T-cell (primary cell): ENCODE measurements at regions of chr20 and their contacts with region 1.

Region 1: GRCh38 chr20:63864847-63865640 is at the start of gene TPD52L2:
- DNase-seq: peak; percentile 91 to 99 (median 97)
- ATAC-seq: peak; percentile 87 to 91 (median 88)
- H3K4me3 ChIP-seq: peak within 1 kb of the TSS; percentile 75 to 95
- H3K4me3 Mint-ChIP-seq: peak within 1 kb of the TSS; percentile 86 to 99 (median 90)
- H3K27ac ChIP-seq: peak within 1 kb of the TSS; percentile 65
- H3K27ac Mint-ChIP-seq: peak within 1 kb of the TSS; percentile 97
- H3K4me1 ChIP-seq: peaks cover 7 to 37% of the 10 kb centered on the region in 2 experiments
- H3K4me1 Mint-ChIP-seq: peaks cover 24 to 32% (median 27%) of the 10 kb centered on the region in 3 donors
- H3K27me3 ChIP-seq: no peaks in the 10 kb centered on the region
- H3K27me3 Mint-ChIP-seq: no peaks in the 10 kb centered on the region
- total RNA-seq, gene TPD52L2: 27.8 to 44.1 (median 39.3) TPM

Region 2: DNA sequence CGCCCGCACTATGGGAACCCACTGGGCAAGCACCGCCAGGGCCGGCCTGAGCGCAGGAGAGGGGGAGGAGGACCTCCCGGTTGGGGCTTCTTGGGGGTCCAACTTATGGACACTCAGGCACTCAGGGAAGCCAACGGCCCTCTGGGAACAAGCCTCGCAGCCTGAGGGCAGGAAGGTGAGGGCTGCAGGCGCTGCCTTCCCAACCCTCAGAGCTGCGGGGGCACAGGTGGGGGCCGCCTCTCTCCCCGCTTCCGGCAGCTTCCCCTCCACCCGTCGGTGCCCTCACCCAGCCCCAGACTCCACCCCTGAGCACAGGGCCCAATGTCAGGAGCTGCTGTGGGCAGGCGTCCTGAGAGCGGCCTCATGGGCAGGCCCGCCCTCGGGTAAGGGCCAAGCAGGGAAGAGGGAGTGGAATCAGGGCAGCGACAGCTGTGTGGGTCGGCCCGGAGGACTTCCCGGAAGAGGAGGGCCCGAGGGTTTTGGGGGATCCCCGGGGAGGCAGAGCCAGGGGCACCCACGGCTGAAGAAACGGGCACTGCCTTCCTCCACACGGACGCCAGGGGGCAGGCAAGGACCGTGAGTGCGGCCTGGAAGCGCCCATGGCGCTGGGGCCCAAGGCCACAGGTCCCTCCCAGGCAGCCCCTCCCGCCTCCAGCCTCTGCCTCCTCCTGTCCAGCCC is 327.4 kb before region 1 on chr20:
- CTCF ChIA-PET with region 1: interaction called, 3 to 13 read pairs
- POLR2A ChIA-PET with region 1: no interaction called
- DNase-seq: peak; percentile 84 to 97 (median 90)
- ATAC-seq: peak; percentile 87 to 91 (median 89)
- H3K4me3 ChIP-seq: peak overlapping the region; percentile 48 to 59
- H3K4me3 Mint-ChIP-seq: peak overlapping the region; percentile 57 to 73 (median 70)
- H3K27ac ChIP-seq: peak overlapping the region; percentile 73
- H3K27ac Mint-ChIP-seq: peak overlapping the region; percentile 73 to 77
- H3K4me1 ChIP-seq: peaks cover 7 to 36% of the 10 kb centered on the region in 2 experiments
- H3K4me1 Mint-ChIP-seq: peaks cover 7 to 16% (median 8%) of the 10 kb centered on the region in 3 donors
- H3K27me3 ChIP-seq: peaks cover 0 to 4% of the 10 kb centered on the region in 2 experiments
- H3K27me3 Mint-ChIP-seq: no peaks in the 10 kb centered on the region